ENCODE measurements at regions of chr9 and their contacts with region 1.

Region 1: GRCh38 chr9:121321016-121321503 is 49.0 kb downstream of the STOM start:
- DNase-seq: peak in 1 of 5 donors; percentile 23
- H3K4me3 ChIP-seq: no peak overlapping the region
- H3K27ac ChIP-seq: no peak overlapping the region
- H3K4me1 ChIP-seq: peaks cover 12% of the 10 kb centered on the region
- H3K27me3 ChIP-seq: no peaks in the 10 kb centered on the region
- CTCF ChIP-seq: no peak
- EP300 ChIP-seq: no peak
- POLR2A ChIP-seq: no peak

Region 2: GRCh38 chr9:121278535-121279261 is 42.4 kb before region 1 on chr9:
- intact Hi-C with region 1: loop called in 1 of 4 experiments (anchors 5 kb)
- DNase-seq: peak in 4 of 5 donors; percentile 72 to 79 (median 73)
- H3K4me3 ChIP-seq: no peak overlapping the region
- H3K27ac ChIP-seq: peak overlapping the region; percentile 60 to 81
- H3K4me1 ChIP-seq: peaks cover 39% of the 10 kb centered on the region
- H3K27me3 ChIP-seq: no peaks in the 10 kb centered on the region
- CTCF ChIP-seq: peak; percentile 81 to 94 (median 89)
- EP300 ChIP-seq: no peak
- POLR2A ChIP-seq: no peak

Region 3: GRCh38 chr9:121376214-121376830 is 55.3 kb after region 1 on chr9:
- intact Hi-C with region 1: loop called (anchors 2 to 10 kb)
- DNase-seq: no peak
- H3K4me3 ChIP-seq: no peak overlapping the region
- H3K27ac ChIP-seq: no peak overlapping the region
- H3K4me1 ChIP-seq: peaks cover 10% of the 10 kb centered on the region
- H3K27me3 ChIP-seq: no peaks in the 10 kb centered on the region
- CTCF ChIP-seq: peak in 1 of 3 donors; percentile 55
- EP300 ChIP-seq: no peak
- POLR2A ChIP-seq: no peak

Region 4: DNA sequence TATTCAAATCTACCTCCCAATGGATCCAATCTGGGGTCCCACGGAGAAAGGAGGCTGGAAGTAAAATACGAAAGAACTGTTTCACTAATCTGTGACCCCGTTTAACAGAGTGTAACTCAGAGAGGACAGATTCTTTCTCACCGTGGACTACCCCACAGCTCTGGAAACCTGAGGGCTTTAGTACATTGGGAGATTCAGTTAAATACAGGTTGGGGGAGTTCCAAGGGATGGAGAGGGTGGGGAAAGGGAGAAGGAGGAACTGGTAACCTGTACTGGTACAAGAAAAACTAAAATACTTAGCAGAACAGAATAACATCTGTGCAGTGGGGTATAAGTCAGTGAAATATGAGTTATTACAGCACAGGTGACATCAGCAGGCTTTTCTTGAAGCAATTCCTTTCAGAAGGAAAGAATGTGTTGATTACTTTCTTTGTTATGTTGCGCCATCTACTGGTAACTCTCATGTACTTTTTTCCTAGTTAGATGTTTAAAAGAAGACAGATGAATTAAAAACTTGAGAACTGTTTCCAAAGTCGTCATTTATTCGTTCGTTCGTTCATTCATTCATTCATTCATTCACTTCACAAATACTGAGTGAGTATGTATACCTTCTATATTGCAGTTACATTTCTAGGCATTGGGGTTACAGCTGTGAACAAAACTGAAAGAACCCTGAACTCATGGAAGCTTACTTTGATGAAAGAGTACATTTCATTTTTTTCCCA is 79.0 kb after region 1 on chr9:
- intact Hi-C with region 1: loop called in 1 of 4 experiments (anchors 2 kb)
- DNase-seq: no peak
- H3K4me3 ChIP-seq: no peak overlapping the region
- H3K27ac ChIP-seq: no peak overlapping the region
- H3K4me1 ChIP-seq: no peaks in the 10 kb centered on the region
- H3K27me3 ChIP-seq: no peaks in the 10 kb centered on the region
- CTCF ChIP-seq: peak; percentile 63 to 79 (median 72)
- EP300 ChIP-seq: no peak
- POLR2A ChIP-seq: no peak

Measured in ovary (tissue), 10 donors.